Activated naive CD4-positive, alpha-beta T cell treated with anti-CD3 and anti-CD28 coated beads, Interleukin-2, amount 10 ng/mL, durations not matched to agents 7 days and 5 days (primary cell): ENCODE measurements at regions of chr16 and their contacts with region 1.

Region 1: DNA sequence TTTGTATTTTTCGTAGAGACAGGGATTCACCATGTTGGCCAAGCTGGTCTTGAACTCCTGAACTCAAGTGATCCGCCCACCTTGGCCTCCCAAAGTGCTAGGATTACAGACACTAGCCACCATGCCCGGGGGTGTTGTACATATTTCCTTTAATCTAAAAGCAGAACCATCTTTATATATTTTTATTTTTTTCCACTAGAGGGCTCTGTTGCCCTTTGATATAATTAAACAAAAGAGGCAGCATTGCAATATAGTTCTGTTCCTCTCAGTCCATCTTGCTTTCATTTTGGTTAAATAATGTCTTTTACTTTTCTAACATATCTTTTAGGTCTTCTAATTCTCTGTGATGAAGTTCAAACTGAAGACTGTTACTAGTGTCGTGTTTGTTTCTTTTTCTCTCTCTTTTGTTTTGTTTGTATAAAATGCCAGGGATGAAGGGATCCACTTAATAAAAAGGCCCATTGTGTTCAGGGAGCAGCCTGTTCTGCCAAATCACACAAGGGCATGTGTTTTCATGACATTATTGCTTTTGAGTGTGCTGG is 23.4 kb downstream of the WWOX start:
- DNase-seq: peak; percentile 32
- H3K4me3 Mint-ChIP-seq: no peak overlapping the region
- H3K27ac Mint-ChIP-seq: peak overlapping the region; percentile 77
- H3K4me1 Mint-ChIP-seq: peaks cover 2% of the 10 kb centered on the region
- H3K27me3 Mint-ChIP-seq: no peaks in the 10 kb centered on the region

Region 2: GRCh38 chr16:78106686-78107085 is 16.2 kb before region 1 on chr16:
- CTCF ChIA-PET with region 1: no interaction called
- DNase-seq: no peak
- H3K4me3 Mint-ChIP-seq: no peak overlapping the region
- H3K27ac Mint-ChIP-seq: no peak overlapping the region
- H3K4me1 Mint-ChIP-seq: peaks cover 7% of the 10 kb centered on the region
- H3K27me3 Mint-ChIP-seq: no peaks in the 10 kb centered on the region

Region 3: DNA sequence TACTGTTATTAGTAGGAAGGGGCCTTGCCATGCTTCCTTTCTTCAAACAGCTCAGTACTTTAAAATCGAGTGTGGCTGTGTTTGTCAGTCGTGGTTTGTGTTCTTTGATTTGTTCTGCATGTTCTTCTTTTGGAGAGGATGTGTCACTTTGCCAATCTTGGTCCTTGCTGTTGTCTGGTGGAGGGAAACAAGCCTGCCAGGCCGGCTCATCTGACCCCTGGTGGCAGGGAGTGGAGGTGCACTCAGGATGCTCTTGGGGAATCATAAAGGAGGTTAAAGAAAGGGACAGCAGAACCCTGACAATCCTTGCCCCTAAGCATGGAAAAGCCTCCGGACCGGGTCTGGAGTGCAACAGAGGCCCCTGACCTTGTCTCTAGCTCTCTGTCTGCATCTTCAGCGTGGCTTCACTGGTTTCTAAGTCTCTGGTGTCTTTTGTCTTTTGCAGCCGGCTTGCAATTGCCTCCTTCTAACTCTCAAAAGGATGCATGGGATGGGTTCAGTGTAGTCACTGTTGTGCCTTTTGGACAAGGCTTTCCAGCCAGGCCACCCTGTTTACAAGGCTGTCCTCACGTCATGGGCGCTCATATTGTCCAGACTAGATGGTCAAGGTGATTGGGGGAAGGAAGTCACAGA is 112.4 kb after region 1 on chr16:
- CTCF ChIA-PET with region 1: interaction called, 15 read pairs
- DNase-seq: peak; percentile 75
- H3K4me3 Mint-ChIP-seq: no peak overlapping the region
- H3K27ac Mint-ChIP-seq: no peak overlapping the region
- H3K4me1 Mint-ChIP-seq: no peaks in the 10 kb centered on the region
- H3K27me3 Mint-ChIP-seq: no peaks in the 10 kb centered on the region